GM12878 (cell line): ENCODE measurements at regions of chr11 and their contacts with region 1.

Region 1: DNA sequence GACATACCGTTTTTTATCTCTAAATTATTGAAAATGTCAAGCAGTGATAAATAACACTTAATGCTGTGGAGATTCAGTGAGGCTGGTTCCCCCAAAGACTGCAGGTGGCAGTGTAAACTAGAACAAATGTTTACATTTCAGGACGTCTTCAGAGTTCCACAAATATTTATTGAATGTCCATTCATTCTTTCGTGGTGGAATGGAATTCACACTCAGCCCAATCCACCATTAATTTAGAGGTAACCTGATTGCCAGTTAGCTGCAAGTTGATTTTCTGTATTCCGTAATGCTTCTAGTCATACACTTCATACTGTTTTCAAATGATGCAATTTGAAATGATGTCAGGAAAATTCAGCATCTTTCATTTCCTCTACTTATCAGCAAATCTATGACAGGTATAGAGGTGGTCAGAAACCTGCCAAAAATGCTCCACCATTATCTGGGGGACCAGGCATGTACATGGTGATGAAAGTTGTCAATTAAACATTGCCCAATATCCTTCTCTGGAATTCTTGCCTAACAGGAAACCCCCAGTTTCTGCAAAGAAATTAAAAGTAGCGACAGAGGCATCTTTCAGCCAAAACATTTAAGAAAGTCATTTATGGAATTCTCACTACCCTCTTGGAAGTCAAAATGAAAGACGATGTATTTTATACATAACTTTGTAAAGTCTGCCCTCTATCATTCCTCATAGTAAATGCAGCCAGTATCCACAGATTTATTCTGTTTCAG is 94.3 kb upstream of the BMAL1 start:
- DNase-seq: no peak
- ATAC-seq: peak; percentile 81
- H3K4me3 ChIP-seq: no peak overlapping the region
- H3K27ac ChIP-seq: no peak overlapping the region
- H3K4me1 ChIP-seq: peaks cover 4% of the 10 kb centered on the region
- H3K27me3 ChIP-seq: no peaks in the 10 kb centered on the region
- CTCF ChIP-seq: peak; percentile 49 to 60 (median 55)
- EP300 ChIP-seq: no peak
- POLR2A ChIP-seq: no peak
- RAD21 ChIP-seq: peak; percentile 59

Region 2: DNA sequence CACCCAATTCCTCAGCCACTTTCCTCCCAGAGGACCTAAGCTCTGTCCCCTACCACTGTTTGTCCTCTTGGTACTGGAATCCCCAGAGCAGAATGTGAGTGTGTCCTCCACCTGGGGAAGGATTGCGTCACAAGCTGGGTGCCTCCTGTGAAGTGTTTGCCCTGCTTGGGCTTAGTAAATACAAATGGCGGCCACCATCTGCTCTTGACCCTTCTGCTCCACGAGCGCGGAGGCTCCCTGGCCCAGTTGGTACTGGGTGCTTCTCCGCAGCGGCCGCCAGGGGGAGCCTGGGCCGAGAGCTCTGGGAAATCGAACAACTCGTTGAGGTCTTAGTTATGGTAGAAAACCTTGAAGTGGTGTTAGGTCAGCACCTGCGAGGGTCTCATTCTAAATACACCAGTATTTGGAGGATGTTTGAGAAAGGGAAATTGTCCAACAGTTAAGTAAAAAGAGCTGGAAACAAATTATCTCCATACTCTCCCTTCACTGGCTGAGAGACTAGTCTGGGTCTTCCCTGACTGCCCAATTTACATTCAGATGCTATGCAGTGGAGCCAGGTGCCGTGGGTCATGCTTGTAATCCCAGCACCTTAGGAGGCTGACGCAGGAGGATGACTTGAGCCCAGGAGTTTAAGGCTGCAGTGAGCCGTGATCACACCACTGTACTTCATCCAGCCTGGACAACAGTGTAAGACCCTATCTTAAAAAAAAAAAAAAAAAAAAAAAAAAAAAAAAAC is 583.7 kb before region 1 on chr11:
- CTCF ChIA-PET with region 1: interaction called, 3 read pairs
- POLR2A ChIA-PET with region 1: no interaction called
- RAD21 ChIA-PET with region 1: no interaction called
- SMC1A ChIA-PET with region 1: no interaction called
- in situ Hi-C with region 1: no loop called
- intact Hi-C with region 1: loop called (anchors 2 kb)
- DNase-seq: peak; percentile 2
- ATAC-seq: peak; percentile 91
- H3K4me3 ChIP-seq: no peak overlapping the region
- H3K27ac ChIP-seq: no peak overlapping the region
- H3K4me1 ChIP-seq: no peaks in the 10 kb centered on the region
- H3K27me3 ChIP-seq: no peaks in the 10 kb centered on the region
- CTCF ChIP-seq: peak; percentile 72 to 94 (median 85)
- EP300 ChIP-seq: no peak
- POLR2A ChIP-seq: no peak
- RAD21 ChIP-seq: peak; percentile 55

Region 3: DNA sequence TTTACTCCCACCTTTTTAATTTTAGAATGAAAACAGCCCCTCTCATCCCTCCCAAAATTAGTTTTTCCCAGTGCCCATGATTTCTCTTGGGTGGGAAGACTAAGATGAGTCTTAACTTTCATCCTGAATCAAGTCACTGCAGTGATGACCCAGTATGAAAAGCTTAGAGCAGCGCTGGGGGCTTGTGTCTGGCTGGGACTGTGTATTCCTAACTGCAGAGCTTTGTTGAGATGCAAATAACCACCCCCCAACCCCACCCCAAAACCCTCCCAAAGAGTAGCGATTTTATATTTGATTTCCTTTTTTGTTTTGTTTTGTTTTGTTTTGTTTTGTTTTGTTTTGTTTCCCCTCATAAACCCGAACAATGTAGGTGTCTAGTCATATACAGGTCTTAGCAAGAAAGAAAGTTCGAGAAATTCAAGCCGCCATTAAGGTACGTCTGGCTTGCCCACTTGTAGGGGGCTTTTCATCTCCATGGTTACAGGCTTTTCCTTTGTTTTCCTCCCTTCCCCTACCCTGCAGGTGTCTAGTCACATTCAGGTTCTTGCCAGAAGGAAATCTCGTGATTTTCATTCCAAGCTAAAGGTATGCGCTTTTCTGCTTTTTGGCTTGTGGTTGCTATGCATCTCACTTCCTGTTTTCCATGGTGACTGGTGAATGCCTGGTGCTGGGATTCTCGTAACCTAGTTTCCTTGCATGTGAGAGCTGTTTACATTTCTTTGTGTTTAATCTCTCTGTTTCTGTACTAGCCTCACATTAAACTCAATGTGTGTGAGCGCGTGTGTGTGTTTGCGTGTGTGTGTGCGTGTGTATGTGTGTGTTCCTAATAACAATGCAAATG is 318.7 kb before region 1 on chr11:
- CTCF ChIA-PET with region 1: no interaction called
- POLR2A ChIA-PET with region 1: no interaction called
- RAD21 ChIA-PET with region 1: no interaction called
- SMC1A ChIA-PET with region 1: no interaction called
- in situ Hi-C with region 1: no loop called
- intact Hi-C with region 1: no loop called
- DNase-seq: no peak
- ATAC-seq: no peak
- H3K4me3 ChIP-seq: no peak overlapping the region
- H3K27ac ChIP-seq: no peak overlapping the region
- H3K4me1 ChIP-seq: no peaks in the 10 kb centered on the region
- H3K27me3 ChIP-seq: no peaks in the 10 kb centered on the region; a peak in 1 of 4 replicates
- CTCF ChIP-seq: no peak
- EP300 ChIP-seq: no peak
- POLR2A ChIP-seq: no peak
- RAD21 ChIP-seq: no peak

Region 4: DNA sequence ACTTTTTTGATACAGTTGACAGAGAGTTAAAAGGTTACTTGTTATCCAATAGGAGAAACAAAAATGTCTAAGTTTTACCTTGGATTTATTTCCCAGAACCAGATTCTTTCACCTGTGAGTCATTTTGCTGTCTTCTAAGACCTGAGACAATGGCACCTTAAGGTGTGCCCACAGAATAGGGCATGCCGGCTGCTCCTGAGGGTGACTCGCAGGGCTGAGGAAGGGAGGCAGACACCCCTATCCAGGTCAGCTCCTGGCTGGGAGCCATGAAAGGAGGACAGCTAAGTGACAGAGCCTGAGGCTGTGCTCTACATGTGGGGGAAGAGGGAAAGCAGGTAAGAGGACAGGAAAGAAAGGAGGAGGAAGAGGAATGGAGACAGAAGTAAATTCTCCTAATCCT is 106.3 kb before region 1 on chr11:
- CTCF ChIA-PET with region 1: no interaction called
- POLR2A ChIA-PET with region 1: no interaction called
- RAD21 ChIA-PET with region 1: no interaction called
- SMC1A ChIA-PET with region 1: no interaction called
- in situ Hi-C with region 1: no loop called
- intact Hi-C with region 1: no loop called
- DNase-seq: no peak
- ATAC-seq: no peak
- H3K4me3 ChIP-seq: no peak overlapping the region
- H3K27ac ChIP-seq: no peak overlapping the region
- H3K4me1 ChIP-seq: no peaks in the 10 kb centered on the region
- H3K27me3 ChIP-seq: peaks cover 0 to 2% of the 10 kb centered on the region in 2 experiments
- CTCF ChIP-seq: no peak
- EP300 ChIP-seq: no peak
- POLR2A ChIP-seq: no peak
- RAD21 ChIP-seq: no peak

Region 5: GRCh38 chr11:13128354-13128753 is 54.9 kb before region 1 on chr11:
- CTCF ChIA-PET with region 1: no interaction called
- POLR2A ChIA-PET with region 1: no interaction called
- RAD21 ChIA-PET with region 1: no interaction called
- SMC1A ChIA-PET with region 1: no interaction called
- in situ Hi-C with region 1: no loop called
- intact Hi-C with region 1: no loop called
- DNase-seq: no peak
- ATAC-seq: no peak
- H3K4me3 ChIP-seq: no peak overlapping the region
- H3K27ac ChIP-seq: no peak overlapping the region
- H3K4me1 ChIP-seq: no peaks in the 10 kb centered on the region
- H3K27me3 ChIP-seq: no peaks in the 10 kb centered on the region
- CTCF ChIP-seq: no peak
- EP300 ChIP-seq: no peak
- POLR2A ChIP-seq: no peak
- RAD21 ChIP-seq: no peak

Region 6: DNA sequence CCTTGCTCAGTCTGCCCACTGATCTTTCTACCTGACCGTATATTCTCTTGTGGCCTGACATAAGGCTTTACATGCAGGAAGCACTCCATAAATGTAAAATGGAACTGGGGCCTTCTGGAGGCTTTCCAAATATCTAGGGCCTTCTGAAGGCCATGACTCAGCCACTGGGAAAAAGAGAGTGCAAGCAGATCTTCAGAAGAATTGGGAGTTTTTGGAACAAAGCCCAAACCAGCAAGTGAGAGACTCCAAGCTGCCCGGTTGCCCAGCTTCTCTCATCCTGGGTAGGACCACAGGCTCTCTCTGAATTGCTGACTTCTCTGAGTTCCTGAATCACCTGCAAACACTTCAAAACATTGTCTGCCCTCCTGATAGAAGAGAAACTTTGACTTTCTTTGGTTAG is 13.6 kb before region 1 on chr11:
- CTCF ChIA-PET with region 1: interaction called, 10 read pairs
- POLR2A ChIA-PET with region 1: no interaction called
- RAD21 ChIA-PET with region 1: no interaction called
- SMC1A ChIA-PET with region 1: no interaction called
- in situ Hi-C with region 1: no loop called
- intact Hi-C with region 1: no loop called
- DNase-seq: no peak
- ATAC-seq: no peak
- H3K4me3 ChIP-seq: no peak overlapping the region
- H3K27ac ChIP-seq: no peak overlapping the region
- H3K4me1 ChIP-seq: no peaks in the 10 kb centered on the region
- H3K27me3 ChIP-seq: peaks cover 0 to 2% of the 10 kb centered on the region in 2 experiments; a peak in 2 of 4 replicates
- CTCF ChIP-seq: no peak
- EP300 ChIP-seq: no peak
- POLR2A ChIP-seq: no peak
- RAD21 ChIP-seq: no peak

Region 7: GRCh38 chr11:13228572-13228971 is 45.3 kb after region 1 on chr11:
- CTCF ChIA-PET with region 1: no interaction called
- POLR2A ChIA-PET with region 1: no interaction called
- RAD21 ChIA-PET with region 1: no interaction called
- SMC1A ChIA-PET with region 1: no interaction called
- in situ Hi-C with region 1: no loop called
- intact Hi-C with region 1: no loop called
- DNase-seq: no peak
- ATAC-seq: peak; percentile 41; the same call in 2 of the 3 replicates
- H3K4me3 ChIP-seq: no peak overlapping the region
- H3K27ac ChIP-seq: no peak overlapping the region
- H3K4me1 ChIP-seq: no peaks in the 10 kb centered on the region
- H3K27me3 ChIP-seq: no peaks in the 10 kb centered on the region; a peak in 1 of 4 replicates
- CTCF ChIP-seq: no peak
- EP300 ChIP-seq: no peak
- POLR2A ChIP-seq: no peak
- RAD21 ChIP-seq: no peak

Region 8: DNA sequence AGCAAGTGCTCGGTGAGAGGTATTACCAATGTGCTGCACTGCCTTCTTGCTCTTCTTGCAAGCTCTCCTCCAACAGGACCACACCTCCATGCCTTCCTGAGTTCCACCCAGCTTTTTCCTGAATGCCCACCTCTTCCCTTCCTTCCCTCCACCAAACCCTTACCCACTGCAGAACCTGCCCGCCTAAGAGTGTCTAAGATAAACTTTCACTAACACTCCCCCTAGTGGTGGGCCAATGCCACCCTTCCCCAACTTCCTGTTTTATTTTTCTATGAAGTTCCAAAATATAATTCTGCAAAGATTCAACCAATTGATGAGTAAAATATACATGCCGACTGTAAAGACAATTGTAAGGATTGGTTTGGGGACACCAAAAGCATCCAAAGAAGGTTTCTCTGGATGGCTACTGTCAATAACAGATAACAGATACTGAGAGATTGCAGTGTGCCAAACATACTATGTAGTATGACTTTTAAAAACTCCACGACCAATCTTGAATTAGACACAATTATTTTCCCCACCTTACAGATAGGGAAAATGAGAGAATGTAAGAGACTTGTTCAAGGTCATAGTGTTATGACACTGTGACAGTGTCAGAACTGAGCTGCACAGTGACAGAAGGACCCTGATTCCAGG is 55.7 kb after region 1 on chr11:
- CTCF ChIA-PET with region 1: interaction called, 4 read pairs
- POLR2A ChIA-PET with region 1: no interaction called
- RAD21 ChIA-PET with region 1: no interaction called
- SMC1A ChIA-PET with region 1: interaction called, 5 read pairs
- in situ Hi-C with region 1: no loop called
- intact Hi-C with region 1: loop called (anchors 2 kb)
- DNase-seq: no peak
- ATAC-seq: peak; percentile 93
- H3K4me3 ChIP-seq: no peak overlapping the region
- H3K27ac ChIP-seq: no peak overlapping the region
- H3K4me1 ChIP-seq: no peaks in the 10 kb centered on the region
- H3K27me3 ChIP-seq: peaks cover 0 to 3% of the 10 kb centered on the region in 2 experiments; a peak in 2 of 4 replicates
- CTCF ChIP-seq: peak; percentile 71 to 91 (median 86)
- EP300 ChIP-seq: no peak
- POLR2A ChIP-seq: no peak
- RAD21 ChIP-seq: peak; percentile 63

Region 9: DNA sequence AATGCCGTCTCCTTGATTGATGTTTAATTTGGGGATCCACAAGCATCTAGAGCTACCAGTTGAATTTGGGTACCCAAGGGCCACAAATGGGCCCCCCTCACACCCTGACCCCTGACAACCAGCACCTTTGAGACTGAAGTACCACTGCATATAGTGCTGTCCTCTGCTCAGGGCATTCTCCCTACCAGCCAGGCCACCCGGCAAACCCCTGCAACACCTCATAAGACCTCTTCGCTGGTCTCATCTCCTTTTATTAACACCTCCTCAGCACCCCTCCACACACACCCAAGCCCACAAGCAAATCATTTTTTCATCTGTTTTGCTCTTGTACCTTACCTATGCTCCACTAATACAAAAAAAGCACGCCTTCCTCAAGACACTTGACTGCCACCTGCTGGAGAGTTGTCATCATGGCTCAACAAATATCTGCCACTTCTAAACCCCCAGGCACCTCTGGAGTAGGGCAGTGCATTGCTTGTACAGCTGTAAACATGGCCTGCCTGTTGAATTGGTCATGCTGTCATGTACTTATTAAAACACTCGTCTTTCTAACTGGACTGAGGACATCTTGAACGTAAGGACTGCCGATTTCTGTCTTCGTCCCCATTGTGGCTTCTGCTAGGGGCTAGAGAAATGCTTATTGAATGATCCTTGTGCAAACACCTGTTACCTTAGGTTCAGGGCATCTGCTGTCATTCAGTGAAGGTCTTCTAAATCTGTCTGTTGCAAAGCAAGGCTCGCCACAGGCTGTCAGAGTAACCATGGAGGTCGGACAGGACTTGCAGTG is 160.9 kb after region 1 on chr11:
- CTCF ChIA-PET with region 1: interaction called, 7 read pairs
- POLR2A ChIA-PET with region 1: no interaction called
- RAD21 ChIA-PET with region 1: no interaction called
- SMC1A ChIA-PET with region 1: interaction called, 4 read pairs
- in situ Hi-C with region 1: no loop called
- intact Hi-C with region 1: loop called (anchors 2 kb)
- DNase-seq: no peak
- ATAC-seq: peak; percentile 69
- H3K4me3 ChIP-seq: no peak overlapping the region
- H3K27ac ChIP-seq: no peak overlapping the region
- H3K4me1 ChIP-seq: peaks cover 40% of the 10 kb centered on the region
- H3K27me3 ChIP-seq: no peaks in the 10 kb centered on the region
- CTCF ChIP-seq: peak; percentile 79 to 84 (median 80)
- EP300 ChIP-seq: no peak
- POLR2A ChIP-seq: no peak
- RAD21 ChIP-seq: peak; percentile 84

Region 10: DNA sequence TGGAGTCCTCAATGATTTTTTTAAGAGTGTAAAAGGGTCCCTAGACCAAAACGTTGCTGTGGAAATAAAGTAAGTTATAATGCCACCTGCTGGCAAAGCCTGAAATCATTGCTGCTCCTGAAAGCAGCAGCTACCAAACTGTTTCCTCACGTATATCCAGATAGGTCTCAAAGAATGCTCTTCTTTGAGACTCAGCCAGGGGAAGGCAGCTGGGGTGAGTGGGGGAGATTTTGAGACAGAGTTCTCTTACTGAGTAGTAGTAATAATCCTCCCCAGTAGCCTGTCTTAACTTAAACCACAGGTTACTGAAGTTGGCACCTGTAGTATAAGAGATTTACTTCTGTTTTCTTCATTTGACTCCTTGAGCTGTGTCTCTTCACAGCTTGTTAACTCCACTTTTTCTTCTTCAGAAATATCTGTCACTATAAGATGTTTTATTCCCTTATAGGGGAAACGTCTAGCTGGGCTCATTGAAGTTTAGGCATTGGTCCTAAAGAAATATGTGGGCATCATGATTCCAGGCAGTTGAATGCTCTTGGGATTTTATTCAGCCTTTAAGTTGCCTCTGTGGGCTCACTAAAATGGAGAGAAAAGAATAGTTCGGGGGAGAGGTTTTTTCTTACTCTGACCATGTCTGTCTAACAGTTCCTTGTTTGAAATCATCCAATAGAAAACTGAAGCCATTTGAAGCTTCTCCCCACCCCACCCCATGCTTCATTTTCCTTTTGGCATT is 201.8 kb after region 1 on chr11:
- CTCF ChIA-PET with region 1: interaction called, 4 read pairs
- POLR2A ChIA-PET with region 1: no interaction called
- RAD21 ChIA-PET with region 1: interaction called, 3 read pairs
- SMC1A ChIA-PET with region 1: interaction called, 4 read pairs
- in situ Hi-C with region 1: no loop called
- intact Hi-C with region 1: loop called (anchors 1 kb)
- DNase-seq: peak; percentile 3
- ATAC-seq: peak; percentile 74
- H3K4me3 ChIP-seq: no peak overlapping the region
- H3K27ac ChIP-seq: no peak overlapping the region
- H3K4me1 ChIP-seq: no peaks in the 10 kb centered on the region
- H3K27me3 ChIP-seq: no peaks in the 10 kb centered on the region
- CTCF ChIP-seq: peak; percentile 58 to 69 (median 58)
- EP300 ChIP-seq: no peak
- POLR2A ChIP-seq: no peak
- RAD21 ChIP-seq: peak; percentile 58